Calu3 (cell line): ENCODE measurements at regions of chrX and their contacts with region 1.

Region 1: GRCh38 chrX:57573754-57574153 is 18.1 kb upstream of the ZXDB start:
- DNase-seq: peak; percentile 17
- H3K4me3 Mint-ChIP-seq: no peak overlapping the region
- H3K27ac Mint-ChIP-seq: no peak overlapping the region
- H3K4me1 Mint-ChIP-seq: no peaks in the 10 kb centered on the region
- H3K27me3 Mint-ChIP-seq: peaks cover 18% of the 10 kb centered on the region
- CTCF ChIP-seq: peak; percentile 12

Region 2: GRCh38 chrX:57741107-57741506 is 167.4 kb after region 1 on chrX:
- CTCF ChIA-PET with region 1: no interaction called
- intact Hi-C with region 1: no loop called
- DNase-seq: no peak
- H3K4me3 Mint-ChIP-seq: no peak overlapping the region
- H3K27ac Mint-ChIP-seq: no peak overlapping the region
- H3K4me1 Mint-ChIP-seq: no peaks in the 10 kb centered on the region
- H3K27me3 Mint-ChIP-seq: no peaks in the 10 kb centered on the region
- CTCF ChIP-seq: no peak

Region 3: GRCh38 chrX:57918750-57919436 is 345.1 kb after region 1 on chrX:
- CTCF ChIA-PET with region 1: no interaction called
- intact Hi-C with region 1: loop called (anchors 5 kb)
- DNase-seq: peak; percentile 60
- H3K4me3 Mint-ChIP-seq: peak overlapping the region; percentile 18
- H3K27ac Mint-ChIP-seq: no peak overlapping the region
- H3K4me1 Mint-ChIP-seq: no peaks in the 10 kb centered on the region
- H3K27me3 Mint-ChIP-seq: peaks cover 44% of the 10 kb centered on the region
- CTCF ChIP-seq: peak; percentile 21

Region 4: DNA sequence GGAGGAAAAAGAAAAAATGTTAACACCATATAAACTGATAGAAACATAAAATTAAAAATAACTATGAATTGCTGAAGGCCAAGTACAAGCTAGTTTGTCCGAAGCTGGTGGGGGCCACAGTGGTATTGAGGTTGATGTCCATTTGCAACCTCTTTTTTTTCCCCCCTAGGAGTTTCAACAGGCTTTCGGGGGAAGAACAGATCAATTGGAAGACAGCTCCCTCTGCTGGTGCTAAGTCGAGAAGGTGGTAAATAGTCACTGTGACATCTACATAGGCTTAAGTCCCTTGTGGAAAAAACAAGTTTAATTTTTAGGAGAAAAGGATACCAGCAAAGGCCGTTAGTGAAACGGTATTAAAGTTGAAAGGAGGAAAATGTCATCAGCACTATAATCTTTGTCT is 452.2 kb after region 1 on chrX:
- CTCF ChIA-PET with region 1: no interaction called
- intact Hi-C with region 1: loop called (anchors 10 kb)
- DNase-seq: peak; percentile 4
- H3K4me3 Mint-ChIP-seq: no peak overlapping the region
- H3K27ac Mint-ChIP-seq: no peak overlapping the region
- H3K4me1 Mint-ChIP-seq: no peaks in the 10 kb centered on the region
- H3K27me3 Mint-ChIP-seq: no peaks in the 10 kb centered on the region
- CTCF ChIP-seq: no peak